Heart right ventricle (tissue), 16 donors: ENCODE measurements at regions of chr16 and their contacts with region 1.

Region 1: GRCh38 chr16:46607529-46607928 is 13.7 kb downstream of the SHCBP1 start:
- DNase-seq: no peak
- ATAC-seq: no peak
- H3K4me3 ChIP-seq: no peak overlapping the region
- H3K27ac ChIP-seq: no peak overlapping the region
- H3K4me1 ChIP-seq: peaks cover 0 to 6% (median 0%) of the 10 kb centered on the region in 9 donors
- H3K27me3 ChIP-seq: no peaks in the 10 kb centered on the region
- CTCF ChIP-seq: peak in 8 of 9 donors; percentile 25 to 61 (median 55)

Region 2: DNA sequence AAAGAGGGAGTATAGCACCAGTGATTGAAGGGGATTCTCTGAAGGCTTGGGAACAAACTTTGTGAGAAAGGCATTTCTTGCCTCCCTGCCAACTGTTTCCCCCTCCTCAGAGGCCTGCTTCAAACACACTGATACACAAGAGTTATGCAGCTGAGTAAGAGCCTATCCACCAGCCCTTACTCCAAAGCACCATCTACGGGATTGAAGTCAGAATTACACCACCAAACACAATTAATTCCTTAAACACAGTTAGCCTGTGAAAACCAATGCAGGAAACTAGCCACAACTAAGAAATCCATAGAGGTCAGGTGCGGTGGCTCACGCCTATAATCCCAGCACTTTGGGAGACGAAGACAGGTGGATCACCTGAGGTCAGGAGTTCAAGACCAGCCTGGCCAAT is 124.6 kb before region 1 on chr16:
- intact Hi-C with region 1: no loop called
- DNase-seq: no peak
- ATAC-seq: no peak
- H3K4me3 ChIP-seq: no peak overlapping the region
- H3K27ac ChIP-seq: no peak overlapping the region
- H3K4me1 ChIP-seq: no peaks in the 10 kb centered on the region
- H3K27me3 ChIP-seq: peaks cover 0 to 4% (median 0%) of the 10 kb centered on the region in 7 donors
- CTCF ChIP-seq: no peak

Region 3: GRCh38 chr16:46555951-46556350 is 51.6 kb before region 1 on chr16:
- intact Hi-C with region 1: loop called in 9 of 10 experiments (anchors 2 to 5 kb)
- DNase-seq: no peak
- ATAC-seq: no peak
- H3K4me3 ChIP-seq: no peak overlapping the region
- H3K27ac ChIP-seq: no peak overlapping the region
- H3K4me1 ChIP-seq: no peaks in the 10 kb centered on the region
- H3K27me3 ChIP-seq: peaks cover 0 to 50% (median 20%) of the 10 kb centered on the region in 7 donors
- CTCF ChIP-seq: no peak

Region 4: DNA sequence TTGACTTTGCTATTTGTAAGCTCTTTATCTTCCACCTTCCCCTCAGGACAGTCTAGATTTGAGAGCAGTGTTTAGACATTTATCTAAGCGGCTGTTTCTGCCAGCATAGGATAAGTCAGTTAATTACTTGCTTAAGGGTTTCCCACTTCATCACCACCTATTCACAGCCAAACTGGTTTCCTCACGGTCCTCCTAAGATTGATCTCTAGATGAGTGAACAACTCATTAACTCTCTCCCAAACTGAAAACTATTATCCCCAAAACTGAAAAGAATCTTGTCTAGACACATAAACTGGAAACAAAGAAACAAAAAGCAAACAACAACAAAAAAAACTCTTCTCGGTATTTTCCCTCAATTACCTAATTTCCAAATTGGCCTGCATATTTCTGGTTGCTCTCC is 44.5 kb before region 1 on chr16:
- intact Hi-C with region 1: loop called in 3 of 10 experiments (anchors 5 kb)
- DNase-seq: no peak
- ATAC-seq: no peak
- H3K4me3 ChIP-seq: no peak overlapping the region
- H3K27ac ChIP-seq: no peak overlapping the region
- H3K4me1 ChIP-seq: no peaks in the 10 kb centered on the region
- H3K27me3 ChIP-seq: peaks cover 0 to 26% (median 0%) of the 10 kb centered on the region in 7 donors
- CTCF ChIP-seq: no peak

Region 5: GRCh38 chr16:46736695-46737094 is 129.2 kb after region 1 on chr16:
- intact Hi-C with region 1: no loop called
- DNase-seq: no peak
- ATAC-seq: peak in 2 of 8 donors; percentile 2 to 13
- H3K4me3 ChIP-seq: no peak overlapping the region
- H3K27ac ChIP-seq: peak overlapping the region in 8 of 10 donors; percentile 10 to 53 (median 27)
- H3K4me1 ChIP-seq: peaks cover 6 to 62% (median 27%) of the 10 kb centered on the region in 9 donors
- H3K27me3 ChIP-seq: no peaks in the 10 kb centered on the region
- CTCF ChIP-seq: no peak